ENCODE measurements at regions of chr10 and their contacts with region 1.

Region 1: GRCh38 chr10:4767033-4767814 is 58.8 kb upstream of the AKR1E2 start:
- DNase-seq: no peak
- ATAC-seq: peak; percentile 73

Region 2: GRCh38 chr10:3239066-3239919 is 1527.9 kb before region 1 on chr10:
- intact Hi-C with region 1: loop called (anchors 5 kb)
- DNase-seq: peak; percentile 90
- ATAC-seq: peak; percentile 87